Activated CD4-positive, alpha-beta T cell treated with anti-CD3 and anti-CD28 coated beads, Interleukin-2, amount 10 ng/mL, durations not matched to agents 24 days and 14 days (primary cell): ENCODE measurements at regions of chr22 and their contacts with region 1.

Region 1: GRCh38 chr22:35660291-35661127 is 12.3 kb downstream of the APOL6 start:
- DNase-seq: peak; percentile 75
- H3K4me3 Mint-ChIP-seq: peak overlapping the region; percentile 64
- H3K27ac Mint-ChIP-seq: peak overlapping the region; percentile 88
- H3K4me1 Mint-ChIP-seq: peaks cover 53% of the 10 kb centered on the region
- H3K27me3 Mint-ChIP-seq: no peaks in the 10 kb centered on the region

Region 2: GRCh38 chr22:35678836-35679235 is 18.3 kb after region 1 on chr22:
- intact Hi-C with region 1: loop called (anchors 2 kb)
- DNase-seq: no peak
- H3K4me3 Mint-ChIP-seq: no peak overlapping the region
- H3K27ac Mint-ChIP-seq: peak overlapping the region; percentile 31
- H3K4me1 Mint-ChIP-seq: peaks cover 15% of the 10 kb centered on the region
- H3K27me3 Mint-ChIP-seq: peaks cover 3% of the 10 kb centered on the region